ENCODE measurements at regions of chr7 and their contacts with region 1.

Region 1: DNA sequence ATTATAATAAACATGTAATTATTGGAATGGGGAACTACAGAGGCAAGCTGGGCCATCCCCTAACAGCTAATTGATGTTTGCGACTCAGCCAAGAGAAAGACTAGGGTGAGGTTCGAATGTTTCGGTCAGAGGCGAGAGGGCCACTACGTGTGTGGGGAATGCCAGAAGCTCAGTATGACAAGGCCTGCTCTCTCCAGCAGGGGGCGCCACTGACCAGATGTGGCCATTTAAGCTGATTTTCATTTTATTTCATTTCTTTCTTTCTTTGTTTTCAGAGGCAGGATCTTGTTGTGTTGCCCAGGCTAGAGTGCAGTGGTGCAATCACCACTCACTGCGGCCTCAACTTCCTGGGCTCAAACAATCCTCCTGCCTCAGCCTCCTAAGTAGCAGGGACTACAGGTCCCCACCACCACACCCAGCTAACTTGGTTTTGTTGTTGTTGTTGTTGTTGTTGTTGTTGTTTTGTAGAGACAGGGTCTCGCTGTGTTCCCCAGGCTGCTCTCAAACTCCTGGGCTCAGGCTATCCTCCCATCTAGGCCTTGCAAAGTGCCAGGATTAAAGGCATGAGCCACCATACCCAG is 38.1 kb downstream of the TMEM130 start:
- DNase-seq: no peak
- ATAC-seq: 0 out of 3 replicates have a peak, but pooled peaks have one; percentile 40
- H3K4me3 ChIP-seq: no peak overlapping the region
- H3K27ac ChIP-seq: no peak overlapping the region
- H3K4me1 ChIP-seq: no peaks in the 10 kb centered on the region
- H3K27me3 ChIP-seq: no peaks in the 10 kb centered on the region
- CTCF ChIP-seq: peak; percentile 23 to 55 (median 49); a peak in 5 of 6 replicates
- EP300 ChIP-seq: no peak
- POLR2A ChIP-seq: no peak
- RAD21 ChIP-seq: no peak

Region 2: GRCh38 chr7:98420966-98421612 is 410.6 kb before region 1 on chr7:
- CTCF ChIA-PET with region 1: interaction called, 128 read pairs
- POLR2A ChIA-PET with region 1: no interaction called
- RAD21 ChIA-PET with region 1: interaction called, 4 read pairs
- SMC1A ChIA-PET with region 1: interaction called, 4 read pairs
- in situ Hi-C with region 1: no loop called
- intact Hi-C with region 1: no loop called
- DNase-seq: no peak
- ATAC-seq: peak; percentile 98
- H3K4me3 ChIP-seq: no peak overlapping the region
- H3K27ac ChIP-seq: no peak overlapping the region
- H3K4me1 ChIP-seq: peaks cover 6% of the 10 kb centered on the region; the same call in 1 of the 2 replicates
- H3K27me3 ChIP-seq: 0 out of 4 replicates have a peak, but pooled peaks cover 0 to 3% of the 10 kb centered on the region in 2 experiments
- CTCF ChIP-seq: peak; percentile 84 to 95 (median 93)
- EP300 ChIP-seq: no peak
- POLR2A ChIP-seq: no peak
- RAD21 ChIP-seq: peak; percentile 59

Region 3: GRCh38 chr7:98703916-98704315 is 127.8 kb before region 1 on chr7:
- CTCF ChIA-PET with region 1: no interaction called
- POLR2A ChIA-PET with region 1: no interaction called
- RAD21 ChIA-PET with region 1: no interaction called
- SMC1A ChIA-PET with region 1: no interaction called
- in situ Hi-C with region 1: no loop called
- intact Hi-C with region 1: no loop called
- DNase-seq: no peak
- ATAC-seq: peak; percentile 31
- H3K4me3 ChIP-seq: no peak overlapping the region
- H3K27ac ChIP-seq: no peak overlapping the region
- H3K4me1 ChIP-seq: peaks cover 12% of the 10 kb centered on the region
- H3K27me3 ChIP-seq: no peaks in the 10 kb centered on the region
- CTCF ChIP-seq: no peak
- EP300 ChIP-seq: no peak
- POLR2A ChIP-seq: no peak
- RAD21 ChIP-seq: no peak